ENCODE measurements at regions of chr2 and their contacts with region 1.

Region 1: DNA sequence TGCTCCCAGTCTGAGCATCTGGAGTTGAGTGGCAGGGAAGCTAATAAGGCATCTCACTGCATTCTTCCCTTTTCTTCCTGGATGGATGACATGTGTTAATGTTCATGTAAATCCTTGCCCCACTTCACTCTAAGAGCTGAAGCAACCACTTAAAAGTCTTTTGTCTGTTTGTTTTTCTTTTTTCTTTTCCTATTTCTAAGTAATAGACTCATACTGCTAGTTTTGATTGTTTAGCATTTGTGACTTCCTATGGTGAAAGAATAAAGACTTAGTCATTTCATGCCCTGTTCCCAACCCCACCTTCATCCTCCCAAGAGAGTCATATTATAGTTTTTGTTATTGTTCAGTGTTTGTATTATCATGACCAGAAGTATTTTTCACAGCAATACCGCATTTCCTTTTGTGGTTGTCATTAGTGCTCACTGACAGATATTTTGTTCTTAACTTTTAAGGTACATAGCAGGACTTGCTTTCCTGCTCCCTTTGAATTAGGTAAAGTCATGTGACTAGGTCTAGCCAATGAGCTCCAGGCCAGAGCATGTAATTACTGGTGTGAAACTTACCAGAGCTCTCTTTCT is 18.1 kb upstream of the SPP2 start:
- DNase-seq: peak in 1 of 2 donors; percentile 80
- ATAC-seq: peak; percentile 73 to 90 (median 83)
- H3K4me3 ChIP-seq: no peak overlapping the region
- H3K4me3 Mint-ChIP-seq: peak overlapping the region; percentile 71
- H3K27ac ChIP-seq: peak overlapping the region; percentile 58
- H3K27ac Mint-ChIP-seq: peak overlapping the region; percentile 83 to 85
- H3K4me1 ChIP-seq: peaks cover 37% of the 10 kb centered on the region
- H3K4me1 Mint-ChIP-seq: peaks cover 59 to 62% of the 10 kb centered on the region in 2 donors
- H3K27me3 ChIP-seq: no peaks in the 10 kb centered on the region
- H3K27me3 Mint-ChIP-seq: no peaks in the 10 kb centered on the region
- CTCF ChIP-seq: no peak

Region 2: GRCh38 chr2:233668605-233669260 is 363.6 kb before region 1 on chr2:
- intact Hi-C with region 1: no loop called
- DNase-seq: no peak
- ATAC-seq: no peak
- H3K4me3 ChIP-seq: no peak overlapping the region
- H3K4me3 Mint-ChIP-seq: no peak overlapping the region
- H3K27ac ChIP-seq: no peak overlapping the region
- H3K27ac Mint-ChIP-seq: no peak overlapping the region
- H3K4me1 ChIP-seq: no peaks in the 10 kb centered on the region
- H3K4me1 Mint-ChIP-seq: no peaks in the 10 kb centered on the region
- H3K27me3 ChIP-seq: no peaks in the 10 kb centered on the region
- H3K27me3 Mint-ChIP-seq: peaks cover 20 to 64% of the 10 kb centered on the region in 2 donors
- CTCF ChIP-seq: no peak

Region 3: GRCh38 chr2:234074751-234075517 is 42.6 kb after region 1 on chr2:
- intact Hi-C with region 1: loop called (anchors 5 kb)
- DNase-seq: no peak
- ATAC-seq: no peak
- H3K4me3 ChIP-seq: no peak overlapping the region
- H3K4me3 Mint-ChIP-seq: no peak overlapping the region
- H3K27ac ChIP-seq: no peak overlapping the region
- H3K27ac Mint-ChIP-seq: no peak overlapping the region
- H3K4me1 ChIP-seq: peaks cover 46% of the 10 kb centered on the region
- H3K4me1 Mint-ChIP-seq: peaks cover 56 to 65% of the 10 kb centered on the region in 2 donors
- H3K27me3 ChIP-seq: no peaks in the 10 kb centered on the region
- H3K27me3 Mint-ChIP-seq: peaks cover 0 to 4% of the 10 kb centered on the region in 2 donors
- CTCF ChIP-seq: no peak

Region 4: DNA sequence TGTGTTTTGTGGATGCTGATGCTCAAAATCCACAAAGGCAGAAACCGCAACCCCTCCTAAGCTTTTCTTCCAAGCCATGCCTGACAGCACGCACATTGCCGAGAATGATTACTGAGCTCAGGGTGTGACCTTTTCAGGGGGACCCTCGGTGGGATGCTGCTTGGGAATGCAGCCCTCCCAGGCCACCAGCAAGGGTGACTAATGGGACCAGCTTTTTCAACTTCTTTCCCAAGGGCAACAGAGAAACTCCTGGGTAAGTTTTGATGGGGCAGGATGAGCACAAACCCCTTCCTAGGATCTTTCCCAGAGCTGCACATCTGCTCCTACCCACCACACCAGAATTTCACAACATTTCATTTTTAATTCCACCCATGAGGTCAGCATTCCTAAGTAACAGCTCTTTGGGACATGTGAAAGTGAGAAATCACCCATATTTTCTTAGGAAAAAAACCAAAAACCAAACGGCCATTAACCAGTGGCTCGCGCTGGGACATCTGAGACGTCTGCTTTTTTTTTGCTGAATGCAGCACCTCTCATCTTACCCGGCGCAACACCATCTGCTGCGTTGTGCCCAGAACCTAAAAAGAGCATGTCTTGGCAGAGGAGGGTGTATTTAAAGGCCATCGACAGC is 345.5 kb after region 1 on chr2:
- intact Hi-C with region 1: no loop called
- DNase-seq: no peak
- ATAC-seq: no peak
- H3K4me3 ChIP-seq: no peak overlapping the region
- H3K4me3 Mint-ChIP-seq: no peak overlapping the region
- H3K27ac ChIP-seq: no peak overlapping the region
- H3K27ac Mint-ChIP-seq: no peak overlapping the region
- H3K4me1 ChIP-seq: peaks cover 9% of the 10 kb centered on the region
- H3K4me1 Mint-ChIP-seq: peaks cover 14 to 30% of the 10 kb centered on the region in 2 donors
- H3K27me3 ChIP-seq: peaks cover 3% of the 10 kb centered on the region
- H3K27me3 Mint-ChIP-seq: no peaks in the 10 kb centered on the region
- CTCF ChIP-seq: no peak